ENCODE measurements at regions of chr20 and their contacts with region 1.

Region 1: DNA sequence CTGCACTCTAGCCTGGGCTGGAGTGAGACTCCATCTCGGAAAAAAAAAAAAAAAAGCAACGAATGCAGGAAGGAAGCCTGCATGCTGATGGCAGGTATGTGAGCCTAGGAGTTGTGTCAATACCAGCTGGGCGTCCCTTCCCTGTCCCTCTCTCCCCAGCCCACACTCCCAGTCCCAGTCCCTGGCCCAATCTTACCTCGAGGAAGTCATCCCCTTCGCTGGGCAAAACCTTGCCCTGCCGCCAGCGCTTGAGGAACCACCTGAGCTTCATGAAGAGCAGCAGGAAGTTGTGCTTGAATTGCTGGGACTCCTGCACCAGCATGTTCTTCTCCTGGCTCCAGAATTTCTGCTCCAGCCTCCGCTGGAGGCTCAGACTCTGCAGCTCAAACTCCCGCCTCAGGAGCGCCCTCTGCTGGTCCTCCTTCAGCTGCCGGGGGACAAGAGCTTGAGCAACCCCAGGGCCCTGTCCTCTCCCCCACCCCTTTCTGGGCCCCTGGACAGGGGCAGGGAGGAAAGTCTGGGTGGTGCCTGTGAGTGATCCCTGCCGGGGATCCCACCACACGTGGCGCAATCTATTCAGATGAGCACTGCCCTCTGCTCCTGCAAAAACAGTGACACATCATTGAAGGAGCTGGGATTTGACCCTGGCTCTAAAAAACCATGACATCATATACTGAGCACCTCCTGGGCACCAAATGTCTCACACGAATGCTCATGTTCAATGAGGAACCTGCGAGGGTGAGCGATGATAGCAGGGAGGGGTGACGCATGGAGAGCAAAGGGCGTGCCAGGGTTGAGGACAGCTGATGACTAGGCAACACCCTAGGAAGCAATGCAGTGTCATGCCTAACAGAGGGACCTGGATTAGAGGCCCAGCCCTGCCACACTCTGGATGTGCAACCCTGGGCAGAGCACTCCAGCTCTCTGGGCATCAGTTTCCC is 35.0 kb upstream of the DSN1 start:
- H3K4me3 ChIP-seq: no peak overlapping the region
- H3K27ac ChIP-seq: no peak overlapping the region
- H3K4me1 ChIP-seq: no peaks in the 10 kb centered on the region
- CTCF ChIP-seq: peak; percentile 70

Region 2: GRCh38 chr20:36786246-36786645 is 22.3 kb before region 1 on chr20:
- CTCF ChIA-PET with region 1: interaction called, 13 read pairs
- POLR2A ChIA-PET with region 1: no interaction called
- H3K4me3 ChIP-seq: no peak overlapping the region
- H3K27ac ChIP-seq: no peak overlapping the region
- H3K4me1 ChIP-seq: no peaks in the 10 kb centered on the region
- CTCF ChIP-seq: no peak

Region 3: GRCh38 chr20:36819659-36820058 is 11.1 kb after region 1 on chr20:
- CTCF ChIA-PET with region 1: interaction called, 18 read pairs
- POLR2A ChIA-PET with region 1: interaction called, 5 read pairs
- H3K4me3 ChIP-seq: no peak overlapping the region
- H3K27ac ChIP-seq: no peak overlapping the region
- H3K4me1 ChIP-seq: peaks cover 7% of the 10 kb centered on the region
- CTCF ChIP-seq: no peak

Region 4: DNA sequence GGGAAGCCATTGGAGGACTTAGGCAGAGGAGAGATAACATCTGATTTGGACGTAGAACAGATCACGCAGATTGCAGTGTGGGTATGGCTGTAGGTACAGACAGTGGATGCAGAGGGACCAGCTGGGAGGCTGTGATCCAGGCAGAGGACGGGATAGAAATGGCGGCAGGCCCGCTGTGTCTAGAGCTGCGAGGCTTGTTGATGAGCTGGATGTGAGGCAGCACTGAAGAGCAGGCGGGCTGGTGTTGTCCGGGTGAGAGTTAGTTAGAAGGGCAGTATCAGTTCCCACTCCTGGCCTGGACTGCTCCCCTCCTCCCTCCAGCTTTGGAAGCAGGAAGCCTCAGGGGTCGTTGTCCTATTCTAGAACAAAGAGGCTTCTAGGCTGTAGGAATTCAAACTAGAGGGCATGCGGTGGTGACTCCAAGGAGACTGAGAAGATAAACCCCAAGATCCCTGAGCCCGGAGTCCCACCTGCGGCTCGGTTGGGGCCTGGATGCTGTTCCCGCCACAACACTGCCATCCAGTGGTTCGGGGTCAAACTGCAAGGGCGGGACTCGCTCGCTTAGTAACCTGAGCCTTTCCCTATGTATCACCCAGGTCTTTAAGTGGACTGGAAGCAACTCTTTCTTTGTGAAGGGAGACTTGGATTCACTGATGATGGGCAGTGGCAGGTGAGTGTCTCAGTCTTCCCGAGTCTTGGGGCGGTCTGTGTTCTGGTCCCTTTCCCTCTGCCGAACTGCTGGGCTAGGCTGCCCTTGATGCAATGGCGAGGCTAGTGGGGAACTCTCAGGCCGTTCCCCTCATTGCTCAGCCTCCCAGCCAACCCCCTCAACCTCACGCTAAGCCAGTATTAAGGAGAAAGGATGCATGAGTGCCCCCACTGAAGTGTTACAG is 78.5 kb after region 1 on chr20:
- CTCF ChIA-PET with region 1: interaction called, 10 read pairs
- POLR2A ChIA-PET with region 1: no interaction called
- H3K4me3 ChIP-seq: no peak overlapping the region
- H3K27ac ChIP-seq: no peak overlapping the region
- H3K4me1 ChIP-seq: no peaks in the 10 kb centered on the region; the same call in 1 of the 2 replicates
- CTCF ChIP-seq: peak; percentile 91